Esophagus muscularis mucosa (tissue), 4 donors: ENCODE measurements at regions of chr11 and their contacts with region 1.

Region 1: GRCh38 chr11:1939006-1939625 is 8.0 kb upstream of the MRPL23 start:
- DNase-seq: no peak
- H3K4me3 ChIP-seq: peak overlapping the region in 1 of 4 donors; percentile 10
- H3K27ac ChIP-seq: peak overlapping the region in 1 of 4 donors; percentile 16
- H3K4me1 ChIP-seq: peaks cover 9 to 15% (median 13%) of the 10 kb centered on the region in 4 donors
- H3K27me3 ChIP-seq: peaks cover 0 to 22% (median 0%) of the 10 kb centered on the region in 4 donors
- CTCF ChIP-seq: no peak
- EP300 ChIP-seq: no peak
- POLR2A ChIP-seq: no peak

Region 2: DNA sequence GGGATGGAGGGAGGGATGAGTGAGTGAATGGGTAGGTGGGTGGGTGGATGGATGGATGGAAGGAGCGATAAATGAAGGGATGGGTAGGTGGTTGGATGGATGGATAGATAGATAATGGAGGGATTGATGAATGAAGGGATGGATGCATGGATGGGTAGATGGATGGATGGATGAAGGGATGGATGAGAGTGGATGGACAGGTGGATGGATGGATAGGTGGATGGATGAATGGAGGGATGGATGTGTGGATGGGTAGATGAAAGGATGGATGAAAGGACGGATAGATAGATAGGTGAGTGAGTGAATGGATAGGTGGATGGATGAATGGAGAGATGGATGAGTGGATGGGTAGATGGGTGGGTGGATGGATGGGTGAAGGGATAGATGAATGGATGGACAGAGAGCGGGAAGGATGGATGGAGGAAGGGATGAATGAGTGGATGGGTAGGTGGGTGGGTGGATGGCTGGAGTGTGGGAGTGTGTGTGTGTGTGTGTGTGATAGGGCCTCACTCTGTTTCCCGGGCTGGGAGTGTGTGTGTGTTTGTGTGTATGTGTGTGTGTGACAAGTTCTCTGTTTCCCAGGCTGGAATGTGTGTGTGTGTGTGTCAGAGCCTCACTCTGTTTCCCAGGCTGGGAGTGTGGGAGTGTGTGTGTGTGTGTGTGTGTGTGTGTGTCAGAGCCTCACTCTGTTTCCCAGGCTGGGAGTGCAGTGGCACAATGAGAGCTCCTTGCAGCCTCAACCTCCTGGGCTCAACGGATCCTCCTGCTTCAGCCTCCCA is 45.3 kb before region 1 on chr11:
- intact Hi-C with region 1: loop called (anchors 1 kb)
- DNase-seq: no peak
- H3K4me3 ChIP-seq: no peak overlapping the region
- H3K27ac ChIP-seq: no peak overlapping the region
- H3K4me1 ChIP-seq: peaks cover 0 to 4% (median 2%) of the 10 kb centered on the region in 4 donors
- H3K27me3 ChIP-seq: peaks cover 0 to 10% (median 0%) of the 10 kb centered on the region in 4 donors
- CTCF ChIP-seq: no peak
- EP300 ChIP-seq: no peak
- POLR2A ChIP-seq: no peak